ENCODE measurements at regions of chr1 and their contacts with region 1.

Region 1: GRCh38 chr1:38834937-38835827 is 24.4 kb downstream of the RRAGC start:
- DNase-seq: peak; percentile 72
- CTCF ChIP-seq: peak; percentile 81

Region 2: GRCh38 chr1:38046884-38047602 is 788.1 kb before region 1 on chr1:
- in situ Hi-C with region 1: loop called (anchors 25 kb)
- DNase-seq: peak; percentile 96
- CTCF ChIP-seq: no peak

Region 3: GRCh38 chr1:38941527-38942019 is 106.4 kb after region 1 on chr1 and contains the start of gene RHBDL2:
- in situ Hi-C with region 1: no loop called
- DNase-seq: no peak
- CTCF ChIP-seq: no peak